ENCODE measurements at regions of chr15 and their contacts with region 1.

Region 1: DNA sequence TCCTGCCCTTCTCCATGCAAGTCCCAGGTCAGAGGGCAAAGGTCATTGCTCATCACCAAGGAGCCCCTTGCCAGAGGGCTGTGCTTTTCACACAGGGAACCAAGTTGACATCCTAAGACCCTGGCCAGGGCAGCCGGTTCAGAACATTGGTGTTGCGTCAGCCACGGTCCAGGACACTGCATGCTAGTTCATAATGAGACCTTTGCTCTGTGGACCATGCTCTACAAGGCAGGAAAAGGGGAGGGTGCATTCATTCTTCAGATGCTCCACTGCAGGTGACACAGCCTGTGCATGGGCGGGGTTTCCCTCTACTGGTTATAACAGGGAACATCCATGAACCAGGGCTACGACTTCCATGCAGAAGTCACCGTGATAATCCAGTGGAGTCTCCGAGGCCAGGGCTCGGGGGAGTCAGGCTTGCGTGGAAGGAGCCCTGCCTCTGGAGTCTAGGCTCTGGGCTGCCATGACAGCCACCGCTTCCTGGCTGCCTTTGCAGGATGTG is 81.6 kb downstream of the OCA2 start:
- DNase-seq: no peak
- ATAC-seq: no peak
- H3K4me3 Mint-ChIP-seq: no peak overlapping the region
- H3K27ac Mint-ChIP-seq: no peak overlapping the region
- H3K4me1 Mint-ChIP-seq: no peaks in the 10 kb centered on the region
- H3K27me3 Mint-ChIP-seq: no peaks in the 10 kb centered on the region
- CTCF ChIP-seq: no peak

Region 2: DNA sequence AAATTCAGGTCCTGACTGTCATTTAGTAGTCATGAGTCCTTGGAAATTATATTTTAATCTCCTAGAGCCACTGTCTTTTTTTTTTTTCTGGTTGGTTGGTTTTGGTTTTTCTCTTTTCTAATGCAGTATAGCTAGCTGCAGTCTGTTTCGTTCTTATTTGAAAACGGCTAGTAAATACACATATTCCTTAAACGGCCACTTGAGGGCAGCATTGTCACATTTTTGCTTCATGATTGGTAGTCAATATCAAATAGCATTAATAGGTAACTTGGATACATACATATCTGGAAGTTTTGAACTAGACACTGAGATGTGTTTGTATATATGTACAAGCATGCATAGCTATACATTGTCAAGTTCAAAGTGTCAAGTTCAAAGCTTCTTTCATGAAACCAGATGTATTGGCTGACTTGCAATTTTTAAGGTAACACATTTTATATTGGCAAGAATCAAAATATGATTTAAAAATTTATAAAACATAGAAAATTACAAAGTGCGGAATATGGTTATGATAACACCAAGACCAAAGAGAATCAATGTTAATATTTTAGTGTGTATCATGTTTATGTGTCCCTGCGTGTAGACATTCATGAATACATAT is 1128.1 kb before region 1 on chr15:
- CTCF ChIA-PET with region 1: no interaction called
- POLR2A ChIA-PET with region 1: no interaction called
- intact Hi-C with region 1: loop called (anchors 5 kb)
- DNase-seq: no peak
- ATAC-seq: no peak
- H3K4me3 Mint-ChIP-seq: no peak overlapping the region
- H3K27ac Mint-ChIP-seq: no peak overlapping the region
- H3K4me1 Mint-ChIP-seq: no peaks in the 10 kb centered on the region
- H3K27me3 Mint-ChIP-seq: peaks cover 5% of the 10 kb centered on the region
- CTCF ChIP-seq: peak; percentile 89

Region 3: GRCh38 chr15:27059610-27060202 is 957.8 kb before region 1 on chr15:
- CTCF ChIA-PET with region 1: no interaction called
- POLR2A ChIA-PET with region 1: no interaction called
- intact Hi-C with region 1: loop called (anchors 5 kb)
- DNase-seq: no peak
- ATAC-seq: no peak
- H3K4me3 Mint-ChIP-seq: no peak overlapping the region
- H3K27ac Mint-ChIP-seq: no peak overlapping the region
- H3K4me1 Mint-ChIP-seq: no peaks in the 10 kb centered on the region
- H3K27me3 Mint-ChIP-seq: no peaks in the 10 kb centered on the region
- CTCF ChIP-seq: no peak